PC-9 (cell line): ENCODE measurements at regions of chr14 and their contacts with region 1.

Region 1: DNA sequence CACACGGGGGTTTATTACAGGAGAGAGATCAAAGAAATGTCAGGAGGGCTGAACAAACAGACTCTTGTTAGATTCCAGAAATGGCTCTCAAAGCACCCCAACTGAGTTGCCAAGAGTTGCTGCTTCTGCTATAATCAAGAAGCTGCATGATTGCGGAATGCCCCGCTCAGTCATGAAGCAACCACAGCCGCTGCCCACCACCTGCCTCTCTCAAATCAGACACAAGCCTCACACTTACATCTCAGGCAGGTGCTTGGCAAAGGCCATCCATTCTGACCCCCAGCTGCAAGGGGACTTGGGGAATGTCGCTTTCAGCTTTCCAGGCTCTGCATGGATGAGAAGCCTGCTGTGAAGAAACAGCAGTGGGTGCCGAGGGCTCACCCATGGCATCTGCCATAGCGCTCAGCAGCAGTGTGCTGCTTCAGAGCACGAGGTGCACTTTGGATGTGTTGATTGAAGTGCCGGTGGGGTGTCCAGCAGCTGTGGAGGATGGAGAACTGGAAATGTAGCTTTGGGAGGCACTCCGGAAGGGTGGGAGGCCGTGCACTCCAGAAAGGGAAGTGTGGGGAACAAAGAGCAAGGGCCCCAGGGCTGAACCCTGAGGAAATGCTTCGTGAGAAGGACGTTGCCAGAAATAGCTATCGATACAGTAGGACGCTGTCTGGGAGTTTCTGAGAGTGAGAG is 37.7 kb downstream of the LRRC74A start:
- DNase-seq: peak; percentile 53 to 59
- H3K4me3 ChIP-seq: no peak overlapping the region
- H3K27ac ChIP-seq: no peak overlapping the region
- H3K4me1 ChIP-seq: no peaks in the 10 kb centered on the region; the same call in 1 of the 2 replicates
- H3K27me3 ChIP-seq: peaks cover 68% of the 10 kb centered on the region
- CTCF ChIP-seq: no peak

Region 2: GRCh38 chr14:77014004-77014604 is 150.2 kb after region 1 on chr14:
- CTCF ChIA-PET with region 1: interaction called, 13 read pairs
- POLR2A ChIA-PET with region 1: no interaction called
- intact Hi-C with region 1: no loop called
- DNase-seq: peak; percentile 42 to 85
- H3K4me3 ChIP-seq: no peak overlapping the region
- H3K27ac ChIP-seq: no peak overlapping the region
- H3K4me1 ChIP-seq: peaks cover 40% of the 10 kb centered on the region
- H3K27me3 ChIP-seq: no peaks in the 10 kb centered on the region
- CTCF ChIP-seq: no peak

Region 3: DNA sequence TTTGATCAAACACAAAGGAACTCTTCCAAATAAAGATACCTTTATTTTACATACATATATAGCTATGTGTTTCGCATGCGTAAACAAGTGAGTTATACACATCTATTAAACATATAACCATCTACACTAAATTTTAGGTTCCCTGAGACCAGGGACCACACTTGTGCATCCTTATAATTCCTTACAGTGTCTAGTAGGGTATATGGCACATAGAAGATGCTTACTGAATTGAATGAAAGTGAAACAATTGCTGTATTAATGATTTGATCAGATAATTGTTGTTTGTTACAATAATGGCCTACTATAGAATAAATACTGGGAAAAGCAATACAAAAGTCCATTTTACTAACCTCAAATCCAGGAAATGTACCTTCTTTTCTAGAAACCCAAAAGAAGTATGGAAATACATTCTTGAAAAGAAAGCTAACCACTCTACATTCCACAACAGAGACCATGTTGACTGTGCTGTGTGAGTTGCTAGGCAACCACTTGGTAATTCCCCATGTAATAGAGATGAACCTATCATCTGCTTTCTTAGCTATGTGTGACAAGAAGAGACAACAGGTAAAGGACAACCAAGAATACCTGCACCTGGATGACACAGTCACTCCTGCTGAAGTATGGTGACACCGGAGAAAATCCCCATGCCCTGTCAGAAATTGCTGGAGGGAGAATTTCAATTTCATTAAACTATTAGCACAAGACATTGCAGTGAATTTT is 222.3 kb after region 1 on chr14:
- CTCF ChIA-PET with region 1: interaction called, 17 read pairs
- POLR2A ChIA-PET with region 1: no interaction called
- intact Hi-C with region 1: no loop called
- DNase-seq: peak; percentile 58 to 86
- H3K4me3 ChIP-seq: no peak overlapping the region
- H3K27ac ChIP-seq: no peak overlapping the region
- H3K4me1 ChIP-seq: peaks cover 38% of the 10 kb centered on the region
- H3K27me3 ChIP-seq: no peaks in the 10 kb centered on the region
- CTCF ChIP-seq: no peak